Psoas muscle (tissue), 8 donors: ENCODE measurements at regions of chr9 and their contacts with region 1.

Region 1: GRCh38 chr9:37079370-37080164 is 40.8 kb upstream of the ZCCHC7 start:
- DNase-seq: peak; percentile 92 to 96
- ATAC-seq: peak; percentile 97 to 99 (median 98)
- H3K4me3 ChIP-seq: peak overlapping the region; percentile 79
- H3K27ac ChIP-seq: peak overlapping the region; percentile 88
- H3K4me1 ChIP-seq: peaks cover 9% of the 10 kb centered on the region
- H3K27me3 ChIP-seq: no peaks in the 10 kb centered on the region
- CTCF ChIP-seq: no peak

Region 2: DNA sequence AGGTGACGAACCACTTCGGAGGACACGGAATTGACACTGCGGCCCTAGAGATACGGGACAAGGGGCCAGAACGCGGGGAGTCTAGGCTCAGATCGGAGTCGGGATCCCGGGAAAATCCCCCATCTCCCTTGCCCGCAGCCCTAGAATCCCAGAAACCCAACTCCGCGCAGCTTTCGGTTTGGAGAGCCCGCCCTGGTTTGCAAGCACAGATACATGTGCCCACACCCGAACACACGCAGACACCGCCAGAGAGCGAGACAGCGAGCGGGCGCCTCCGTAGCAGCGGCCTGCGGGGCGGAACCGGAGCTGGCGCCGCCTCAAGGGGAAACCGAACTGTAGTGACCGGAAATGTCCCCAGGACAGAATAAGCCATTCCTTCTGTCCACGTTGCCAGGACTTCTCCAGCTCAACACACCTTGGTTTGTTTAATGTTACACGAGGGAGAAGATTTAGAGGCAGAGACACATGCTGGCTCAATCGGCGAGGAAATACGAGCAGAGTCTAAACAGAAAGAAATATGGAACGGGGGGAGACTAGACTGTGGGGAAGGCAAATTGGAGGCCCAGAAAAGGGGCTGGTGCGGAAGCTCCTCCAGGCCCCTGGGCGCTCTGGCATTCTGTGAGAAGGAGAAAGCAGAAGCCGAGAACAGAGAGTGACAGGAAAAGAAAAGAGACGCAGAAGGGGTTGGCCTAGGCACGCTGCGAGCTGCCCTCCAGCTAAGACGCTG is 42.6 kb before region 1 on chr9:
- intact Hi-C with region 1: no loop called
- DNase-seq: peak in 1 of 2 donors; percentile 61
- ATAC-seq: peak; percentile 59 to 80 (median 78)
- H3K4me3 ChIP-seq: peak overlapping the region; percentile 69
- H3K27ac ChIP-seq: no peak overlapping the region
- H3K4me1 ChIP-seq: peaks cover 22% of the 10 kb centered on the region
- H3K27me3 ChIP-seq: peaks cover 0 to 100% (median 56%) of the 10 kb centered on the region in 3 donors
- CTCF ChIP-seq: no peak

Region 3: GRCh38 chr9:37119907-37120842 is 40.6 kb after region 1 on chr9 and contains the start of gene ZCCHC7:
- intact Hi-C with region 1: loop called (anchors 2 to 5 kb)
- DNase-seq: peak; percentile 96 to 98
- ATAC-seq: peak; percentile 98 to 99 (median 98)
- H3K4me3 ChIP-seq: peak within 1 kb of the TSS; percentile 86
- H3K27ac ChIP-seq: peak within 1 kb of the TSS; percentile 95
- H3K4me1 ChIP-seq: peaks cover 8% of the 10 kb centered on the region
- H3K27me3 ChIP-seq: no peaks in the 10 kb centered on the region
- CTCF ChIP-seq: no peak
- total RNA-seq, gene ZCCHC7: 6.9 to 10.3 (median 8.0) TPM

Region 4: GRCh38 chr9:37156781-37157356 is 77.3 kb after region 1 on chr9:
- intact Hi-C with region 1: no loop called
- DNase-seq: no peak
- ATAC-seq: no peak
- H3K4me3 ChIP-seq: no peak overlapping the region
- H3K27ac ChIP-seq: no peak overlapping the region
- H3K4me1 ChIP-seq: no peaks in the 10 kb centered on the region
- H3K27me3 ChIP-seq: no peaks in the 10 kb centered on the region
- CTCF ChIP-seq: no peak